AG04449 (cell line): ENCODE measurements at regions of chr9 and their contacts with region 1.

Region 1: GRCh38 chr9:22008736-22009562 is at the start of gene CDKN2B:
- DNase-seq: peak; percentile 72
- H3K4me3 ChIP-seq: peak within 1 kb of the TSS; percentile 81
- CTCF ChIP-seq: peak; percentile 84

Region 2: DNA sequence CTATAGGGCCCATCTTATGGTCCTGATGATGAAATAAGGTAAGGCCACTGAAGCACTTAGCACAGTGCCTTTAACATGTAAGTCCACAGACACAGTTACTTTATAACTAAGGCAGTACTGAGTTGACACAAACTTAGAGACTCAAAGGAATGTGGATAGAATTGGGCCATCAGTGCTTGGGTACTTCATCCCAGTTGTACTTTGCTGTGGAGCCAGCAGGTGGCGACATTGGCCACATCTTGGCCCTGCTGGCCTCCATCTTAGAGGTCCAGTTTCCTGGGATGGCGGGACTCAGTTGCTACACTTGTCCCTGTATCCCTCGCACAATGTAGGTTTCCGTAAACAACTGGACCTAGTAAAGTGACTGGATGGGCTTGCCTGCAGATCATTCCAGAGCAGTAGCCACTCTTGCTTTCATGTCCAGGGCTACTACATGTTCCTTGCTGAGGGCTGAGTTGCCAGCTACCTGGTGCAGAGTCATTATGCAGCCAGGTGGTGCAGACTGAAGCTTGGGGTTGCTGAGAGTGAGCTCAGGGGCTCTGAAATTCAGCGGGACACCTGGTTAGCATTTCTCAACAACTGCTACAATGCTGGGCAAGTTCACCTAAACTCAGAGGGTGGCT is 195.9 kb before region 1 on chr9:
- CTCF ChIA-PET with region 1: interaction called, 248 read pairs
- POLR2A ChIA-PET with region 1: interaction called, 8 read pairs
- DNase-seq: no peak
- H3K4me3 ChIP-seq: no peak overlapping the region
- CTCF ChIP-seq: peak; percentile 85

Region 3: DNA sequence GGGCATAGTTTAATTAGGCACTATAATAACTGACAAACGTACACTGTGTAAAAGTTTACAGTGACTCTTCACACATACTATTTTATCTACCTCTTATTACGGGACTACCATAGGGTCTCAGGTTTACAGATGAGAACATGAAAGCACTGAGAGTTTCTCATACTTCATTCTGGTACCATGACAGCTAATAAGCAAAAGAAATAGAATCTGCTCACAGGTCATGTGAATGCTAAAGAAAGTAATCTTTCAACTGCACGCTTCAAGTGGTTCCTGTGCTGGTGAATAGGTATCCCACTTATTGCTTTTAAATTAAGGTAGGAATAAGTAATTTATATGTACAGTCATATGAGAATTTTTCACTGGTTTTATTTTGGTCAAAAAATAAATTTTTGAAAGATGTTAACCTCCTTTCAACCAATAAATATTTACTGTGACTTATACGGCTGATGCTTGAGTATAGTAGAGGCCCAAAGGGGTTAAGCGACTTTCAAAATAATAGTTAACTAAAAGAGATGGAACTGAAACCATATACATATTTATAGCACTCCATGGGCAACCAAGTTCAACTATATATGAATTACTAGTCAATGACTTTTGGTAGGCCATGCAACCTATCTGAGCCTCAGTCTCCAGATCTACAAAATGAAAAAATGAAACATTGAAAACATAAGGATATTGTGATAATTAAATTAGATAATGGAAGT is 22.8 kb before region 1 on chr9:
- CTCF ChIA-PET with region 1: interaction called, 129 read pairs
- POLR2A ChIA-PET with region 1: interaction called, 10 read pairs
- DNase-seq: no peak
- H3K4me3 ChIP-seq: no peak overlapping the region
- CTCF ChIP-seq: no peak

Region 4: DNA sequence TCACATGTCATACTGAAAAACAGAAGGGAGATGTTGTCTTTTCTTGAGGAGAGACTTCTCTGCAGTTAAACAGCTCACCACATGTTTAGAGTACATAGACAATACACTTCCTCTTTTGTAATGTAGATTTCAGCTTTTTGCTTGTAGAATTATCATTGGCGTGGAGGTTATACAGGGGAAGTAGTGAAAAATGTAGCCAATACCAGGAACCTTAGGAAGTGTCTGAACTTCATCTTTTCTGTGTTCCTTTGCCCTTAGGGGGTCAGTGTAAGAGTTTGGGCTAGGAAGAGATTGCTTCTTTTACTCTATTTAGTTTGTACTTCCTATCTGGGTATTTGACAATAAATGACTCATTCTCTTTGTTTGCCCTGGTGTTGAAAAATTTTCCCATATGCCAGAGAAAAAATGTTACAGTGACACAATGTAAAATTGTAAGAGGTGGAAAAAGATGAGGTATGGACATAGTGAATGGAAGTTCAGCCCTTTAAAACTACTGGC is 21.2 kb after region 1 on chr9:
- CTCF ChIA-PET with region 1: interaction called, 41 read pairs
- POLR2A ChIA-PET with region 1: no interaction called
- DNase-seq: no peak
- H3K4me3 ChIP-seq: no peak overlapping the region
- CTCF ChIP-seq: no peak

Region 5: GRCh38 chr9:22084336-22085035 is 75.5 kb after region 1 on chr9:
- CTCF ChIA-PET with region 1: interaction called, 11 read pairs
- POLR2A ChIA-PET with region 1: no interaction called
- DNase-seq: peak; percentile 94
- H3K4me3 ChIP-seq: no peak overlapping the region
- CTCF ChIP-seq: no peak

Region 6: GRCh38 chr9:22119537-22120158 is 110.7 kb after region 1 on chr9:
- CTCF ChIA-PET with region 1: interaction called, 106 read pairs
- POLR2A ChIA-PET with region 1: interaction called, 17 read pairs
- DNase-seq: no peak
- H3K4me3 ChIP-seq: no peak overlapping the region
- CTCF ChIP-seq: peak; percentile 51

Region 7: GRCh38 chr9:22211593-22212360 is 202.8 kb after region 1 on chr9:
- CTCF ChIA-PET with region 1: interaction called, 21 read pairs
- POLR2A ChIA-PET with region 1: no interaction called
- DNase-seq: peak; percentile 71
- H3K4me3 ChIP-seq: no peak overlapping the region
- CTCF ChIP-seq: no peak